HCT116 (cell line): ENCODE measurements at regions of chr1 and their contacts with region 1.

Region 1: DNA sequence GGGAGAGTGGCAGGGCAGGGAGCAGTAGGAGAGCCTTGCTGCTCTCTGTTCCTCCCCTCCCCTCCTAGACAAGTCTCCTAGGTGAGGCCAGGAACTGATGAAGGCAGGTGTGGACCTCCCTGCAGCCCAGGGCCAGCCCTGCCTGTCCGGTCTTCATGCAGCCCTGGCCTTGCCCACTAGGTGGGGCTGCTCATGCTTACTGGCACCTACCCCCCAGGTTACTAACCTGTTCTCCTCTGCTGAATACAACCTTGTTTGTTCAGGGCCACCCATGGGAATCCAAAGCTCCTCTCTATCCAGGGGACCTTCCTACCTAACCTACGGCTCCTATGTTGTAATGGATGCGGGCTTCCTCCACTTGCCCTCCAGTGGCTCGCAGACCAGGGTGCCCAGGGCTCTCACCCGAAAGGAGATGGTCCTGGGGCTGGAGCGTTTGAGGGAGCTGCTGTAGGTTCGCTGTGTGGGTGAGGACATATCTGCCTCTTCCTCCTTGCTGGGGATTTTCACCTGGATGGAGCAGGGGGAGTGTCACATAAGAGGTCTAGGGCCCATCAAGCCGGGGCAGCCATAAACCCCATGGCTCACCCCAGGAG is 7.9 kb upstream of the TNNT2 start:
- DNase-seq: no peak
- ATAC-seq: peak; percentile 94
- H3K4me3 ChIP-seq: no peak overlapping the region
- H3K27ac ChIP-seq: no peak overlapping the region
- H3K4me1 ChIP-seq: no peaks in the 10 kb centered on the region
- H3K27me3 ChIP-seq: no peaks in the 10 kb centered on the region
- CTCF ChIP-seq: peak; percentile 88 to 97 (median 90)
- POLR2A ChIP-seq: no peak
- RAD21 ChIP-seq: peak; percentile 86

Region 2: GRCh38 chr1:201408176-201408833 is 22.9 kb after region 1 on chr1:
- CTCF ChIA-PET with region 1: interaction called, 8 read pairs
- POLR2A ChIA-PET with region 1: no interaction called
- RAD21 ChIA-PET with region 1: no interaction called
- intact Hi-C with region 1: loop called (anchors 1 kb)
- DNase-seq: peak; percentile 51
- ATAC-seq: peak; percentile 93
- H3K4me3 ChIP-seq: no peak overlapping the region
- H3K27ac ChIP-seq: no peak overlapping the region
- H3K4me1 ChIP-seq: peaks cover 5 to 41% of the 10 kb centered on the region in 2 experiments; a peak in 3 of 4 replicates
- H3K27me3 ChIP-seq: no peaks in the 10 kb centered on the region
- CTCF ChIP-seq: peak; percentile 90 to 98 (median 96)
- POLR2A ChIP-seq: no peak
- RAD21 ChIP-seq: peak; percentile 91